Psoas muscle (tissue), 8 donors: ENCODE measurements at regions of chr22 and their contacts with region 1.

Region 1: DNA sequence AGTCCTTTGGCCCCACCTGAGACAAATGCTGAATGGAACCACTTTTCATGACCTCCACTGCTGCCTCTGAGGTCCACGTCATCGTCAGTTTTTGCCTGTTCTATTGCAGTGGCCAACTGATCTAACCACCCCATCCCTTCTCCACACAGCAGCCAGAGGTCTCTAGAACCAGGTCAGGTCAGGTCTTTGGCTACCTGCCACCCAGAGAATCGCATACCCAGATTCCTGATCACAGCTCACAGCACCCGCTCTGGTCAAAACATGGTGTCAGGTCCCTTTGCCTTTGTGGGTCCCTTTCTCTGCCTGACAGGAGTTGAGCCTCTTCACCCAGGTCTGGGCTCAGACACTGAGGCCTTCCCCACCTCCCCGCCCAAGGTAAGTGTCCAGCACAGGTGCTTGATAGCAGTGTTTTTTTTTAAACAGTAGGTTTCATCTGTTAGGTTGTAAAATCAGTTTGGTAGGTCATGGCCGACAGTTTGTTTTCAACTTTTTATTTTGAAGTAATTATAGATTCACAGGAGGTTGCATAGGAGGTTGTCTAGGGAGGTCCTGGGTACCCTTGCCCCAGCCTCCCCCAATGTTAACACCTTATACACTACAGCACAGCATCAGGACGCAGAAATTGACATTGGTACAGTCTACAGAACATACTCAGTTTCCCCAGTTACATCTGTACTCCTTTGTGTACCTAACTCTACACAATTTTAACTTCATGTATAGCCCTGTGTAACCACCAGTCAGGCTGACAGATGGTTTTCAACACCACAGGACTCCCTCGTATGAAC is 6.9 kb downstream of the C22orf39 start:
- DNase-seq: peak; percentile 43 to 81
- ATAC-seq: peak; percentile 65 to 80 (median 78)
- H3K4me3 ChIP-seq: no peak overlapping the region
- H3K27ac ChIP-seq: peak overlapping the region; percentile 73
- H3K4me1 ChIP-seq: peaks cover 65% of the 10 kb centered on the region
- H3K27me3 ChIP-seq: no peaks in the 10 kb centered on the region
- CTCF ChIP-seq: no peak

Region 2: GRCh38 chr22:19479357-19480172 is 39.0 kb after region 1 on chr22 and contains the start of gene CDC45:
- intact Hi-C with region 1: loop called in 1 of 2 experiments (anchors 5 kb)
- DNase-seq: peak; percentile 96 to 98
- ATAC-seq: peak; percentile 88 to 92 (median 90)
- H3K4me3 ChIP-seq: peak within 1 kb of the TSS; percentile 84
- H3K27ac ChIP-seq: peak within 1 kb of the TSS; percentile 97
- H3K4me1 ChIP-seq: peaks cover 35% of the 10 kb centered on the region
- H3K27me3 ChIP-seq: no peaks in the 10 kb centered on the region
- CTCF ChIP-seq: no peak
- total RNA-seq, gene CDC45: 0.50 to 0.71 TPM in 2 of 4 donors, not detected in the others